CD8-positive, alpha-beta memory T cell (primary cell): ENCODE measurements at regions of chr12 and their contacts with region 1.

Region 1: DNA sequence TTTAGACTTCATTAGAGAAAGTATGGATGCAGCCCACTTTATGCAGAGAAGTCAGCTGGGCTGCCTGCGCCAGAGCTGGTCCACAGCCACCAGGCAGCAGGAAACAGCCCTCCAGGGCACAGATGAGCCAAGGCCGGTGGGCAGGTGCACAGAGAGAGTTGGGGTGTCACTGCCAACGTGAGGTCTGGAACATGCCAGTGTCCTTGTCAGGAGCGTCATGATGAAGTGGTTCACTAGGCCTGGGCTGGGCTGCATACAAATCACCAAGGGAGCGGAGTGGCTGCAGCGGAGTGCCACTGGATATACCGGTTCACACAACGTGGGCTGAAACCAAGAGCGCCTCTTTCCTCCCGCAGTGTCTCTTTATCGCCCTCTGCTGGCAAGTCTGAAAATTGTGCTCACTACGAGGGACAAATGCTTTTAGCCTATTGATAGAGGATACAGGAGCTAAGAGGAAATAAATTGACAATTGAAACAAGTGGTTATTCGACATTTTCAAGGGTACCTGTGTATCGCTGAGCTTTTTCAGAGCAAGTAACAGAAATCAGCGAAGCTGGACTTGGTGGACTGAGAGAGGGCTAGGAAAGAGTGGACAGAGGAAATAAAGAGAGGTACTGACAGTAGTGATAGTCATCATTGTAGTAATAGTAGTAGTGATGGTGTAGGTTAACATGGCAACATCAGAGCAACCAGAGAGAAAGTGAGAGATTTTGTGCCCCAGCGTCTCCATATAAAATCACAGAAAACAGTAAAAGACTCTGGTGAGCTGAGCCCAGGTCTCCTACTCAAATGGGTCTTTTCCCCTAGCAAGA is 52.0 kb upstream of the ITPR2 start:
- DNase-seq: peak; percentile 71 to 86 (median 76)
- H3K4me3 ChIP-seq: peak overlapping the region; percentile 31
- H3K4me3 Mint-ChIP-seq: peak overlapping the region in 6 of 7 donors; percentile 50 to 81 (median 74)
- H3K27ac ChIP-seq: no peak overlapping the region
- H3K27ac Mint-ChIP-seq: peak overlapping the region in 1 of 8 donors; percentile 21
- H3K4me1 ChIP-seq: no peaks in the 10 kb centered on the region
- H3K4me1 Mint-ChIP-seq: peaks cover 8 to 9% (median 8%) of the 10 kb centered on the region in 3 donors
- H3K27me3 ChIP-seq: no peaks in the 10 kb centered on the region
- H3K27me3 Mint-ChIP-seq: peaks cover 9 to 11% of the 10 kb centered on the region in 2 donors

Region 2: GRCh38 chr12:26874501-26875296 is 10.3 kb before region 1 on chr12:
- CTCF ChIA-PET with region 1: interaction called, 14 read pairs
- POLR2A ChIA-PET with region 1: no interaction called
- DNase-seq: no peak
- H3K4me3 ChIP-seq: no peak overlapping the region
- H3K4me3 Mint-ChIP-seq: no peak overlapping the region
- H3K27ac ChIP-seq: no peak overlapping the region
- H3K27ac Mint-ChIP-seq: peak overlapping the region in 1 of 8 donors; percentile 9
- H3K4me1 ChIP-seq: no peaks in the 10 kb centered on the region
- H3K4me1 Mint-ChIP-seq: no peaks in the 10 kb centered on the region
- H3K27me3 ChIP-seq: no peaks in the 10 kb centered on the region
- H3K27me3 Mint-ChIP-seq: peaks cover 0 to 8% of the 10 kb centered on the region in 2 donors

Region 3: GRCh38 chr12:26896913-26897312 is 11.9 kb after region 1 on chr12:
- CTCF ChIA-PET with region 1: interaction called, 16 read pairs
- POLR2A ChIA-PET with region 1: no interaction called
- DNase-seq: no peak
- H3K4me3 ChIP-seq: no peak overlapping the region
- H3K4me3 Mint-ChIP-seq: no peak overlapping the region
- H3K27ac ChIP-seq: no peak overlapping the region
- H3K27ac Mint-ChIP-seq: peak overlapping the region in 2 of 8 donors; percentile 40
- H3K4me1 ChIP-seq: no peaks in the 10 kb centered on the region
- H3K4me1 Mint-ChIP-seq: peaks cover 0 to 8% (median under 1%) of the 10 kb centered on the region in 3 donors
- H3K27me3 ChIP-seq: no peaks in the 10 kb centered on the region
- H3K27me3 Mint-ChIP-seq: no peaks in the 10 kb centered on the region